ENCODE measurements at regions of chr12 and their contacts with region 1.

Region 1: DNA sequence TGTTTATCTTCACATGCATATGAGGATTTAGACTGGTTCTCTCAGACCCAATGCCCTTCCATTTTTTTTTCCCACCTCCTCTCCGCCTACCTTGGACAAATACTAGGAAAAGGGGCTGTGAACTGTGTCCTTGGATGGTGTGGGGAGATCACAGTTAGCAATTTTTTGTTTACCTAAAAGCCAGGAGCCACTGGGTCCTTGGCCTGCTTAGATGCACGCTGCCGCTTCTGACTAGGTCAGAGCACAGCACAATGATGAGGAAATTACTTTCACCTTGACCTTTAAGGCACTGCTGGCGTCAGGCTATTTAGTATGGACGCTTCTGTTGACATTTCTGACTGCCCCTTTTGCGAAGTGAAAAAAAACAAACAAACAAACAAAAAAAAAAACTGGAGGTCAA is 1.9 kb downstream of the CCDC38 start:
- DNase-seq: no peak
- H3K27ac ChIP-seq: no peak overlapping the region
- CTCF ChIP-seq: no peak

Region 2: DNA sequence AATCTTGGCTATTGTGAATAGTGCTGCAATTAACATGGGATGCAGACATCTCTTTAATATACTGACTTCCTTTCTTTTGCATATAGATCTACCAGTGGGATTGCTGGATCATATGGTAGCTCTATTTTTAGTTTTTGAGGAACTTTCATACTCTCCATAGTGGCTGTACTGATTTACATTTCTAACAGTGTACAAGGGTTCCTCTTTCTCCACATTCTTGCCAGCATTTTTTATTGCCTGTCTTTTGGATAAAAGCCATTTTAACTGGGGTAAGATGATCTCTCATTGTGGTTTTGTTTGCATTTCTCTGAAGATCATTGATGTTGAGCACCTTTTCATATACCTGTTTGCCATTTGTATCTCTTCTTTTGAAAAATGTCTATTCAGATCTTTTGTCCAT is 11.0 kb after region 1 on chr12:
- CTCF ChIA-PET with region 1: no interaction called
- POLR2A ChIA-PET with region 1: no interaction called
- DNase-seq: no peak
- H3K27ac ChIP-seq: no peak overlapping the region
- CTCF ChIP-seq: no peak

Region 3: GRCh38 chr12:96177013-96177412 is 236.5 kb after region 1 on chr12:
- CTCF ChIA-PET with region 1: interaction called, 10 read pairs
- POLR2A ChIA-PET with region 1: no interaction called
- DNase-seq: peak; percentile 55
- H3K27ac ChIP-seq: no peak overlapping the region
- CTCF ChIP-seq: no peak